ENCODE measurements at regions of chr2 and their contacts with region 1.

Region 1: DNA sequence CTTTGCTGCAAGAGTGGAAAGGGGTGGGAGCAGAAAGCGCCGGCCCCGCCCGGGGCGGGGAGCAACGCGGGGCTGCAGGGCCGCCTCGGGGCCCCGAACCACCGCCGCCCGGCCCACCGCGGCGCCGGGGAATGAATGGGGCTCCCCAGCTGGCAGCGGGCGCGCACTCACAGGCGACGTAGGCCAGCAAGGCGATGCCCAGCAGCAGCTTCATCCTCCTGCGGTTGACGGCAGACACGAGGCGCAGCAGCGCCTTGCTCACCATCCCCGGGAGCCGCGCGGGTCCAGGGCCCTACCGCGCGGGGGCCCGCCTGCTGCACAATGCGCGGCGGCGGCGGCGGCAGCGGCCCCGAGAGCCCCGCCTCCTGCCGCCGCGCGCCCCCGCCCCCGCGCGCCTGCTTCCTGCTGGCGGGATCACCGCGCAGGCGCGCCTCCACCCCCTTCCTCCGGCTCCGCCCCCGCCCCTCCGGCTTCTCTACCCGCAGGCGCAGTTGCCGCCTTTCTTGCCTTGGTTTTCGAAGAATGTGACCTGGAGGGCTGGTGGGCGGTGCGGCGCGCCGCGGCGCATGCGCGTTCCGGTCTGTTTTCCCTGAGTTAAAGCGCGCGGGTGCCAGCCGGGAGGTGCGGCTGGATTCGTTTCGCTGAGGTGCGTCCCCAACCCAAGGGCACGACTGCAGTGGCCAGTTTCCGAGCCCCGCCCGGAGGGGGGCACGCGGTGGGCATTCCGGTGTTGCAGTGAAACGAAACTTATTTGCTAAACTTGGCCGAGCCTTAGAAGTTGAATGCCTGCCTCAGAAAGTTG is at the start of gene UXS1:
- DNase-seq: peak; percentile 96 to 97 (median 96)
- H3K4me3 ChIP-seq: peak within 1 kb of the TSS; percentile 60 to 97 (median 78)
- H3K4me3 Mint-ChIP-seq: peak within 1 kb of the TSS; percentile 90 to 91
- H3K27ac ChIP-seq: peak within 1 kb of the TSS; percentile 72 to 86
- H3K27ac Mint-ChIP-seq: peak within 1 kb of the TSS; percentile 89 to 97 (median 91)
- H3K4me1 ChIP-seq: peaks cover 46 to 47% of the 10 kb centered on the region in 2 donors
- H3K4me1 Mint-ChIP-seq: peaks cover 55% of the 10 kb centered on the region
- H3K27me3 ChIP-seq: no peaks in the 10 kb centered on the region
- H3K27me3 Mint-ChIP-seq: peaks cover 1 to 3% (median 2%) of the 10 kb centered on the region in 3 donors
- CTCF ChIP-seq: no peak
- polyA plus RNA-seq, gene UXS1: 23.4 to 33.8 (median 29.3) TPM

Region 2: GRCh38 chr2:105329561-105330495 is 864.4 kb before region 1 on chr2 and contains the start of gene TGFBRAP1:
- intact Hi-C with region 1: loop called in 1 of 2 experiments (anchors 5 kb)
- DNase-seq: peak in 2 of 3 donors; percentile 49 to 51
- H3K4me3 ChIP-seq: peak within 1 kb of the TSS; percentile 59 to 83 (median 70)
- H3K4me3 Mint-ChIP-seq: peak within 1 kb of the TSS; percentile 85 to 99
- H3K27ac ChIP-seq: peak within 1 kb of the TSS; percentile 52 to 86
- H3K27ac Mint-ChIP-seq: peak within 1 kb of the TSS; percentile 81 to 95 (median 88)
- H3K4me1 ChIP-seq: peaks cover 30 to 38% of the 10 kb centered on the region in 2 donors
- H3K4me1 Mint-ChIP-seq: peaks cover 43% of the 10 kb centered on the region
- H3K27me3 ChIP-seq: no peaks in the 10 kb centered on the region
- H3K27me3 Mint-ChIP-seq: no peaks in the 10 kb centered on the region
- CTCF ChIP-seq: no peak
- polyA plus RNA-seq, gene TGFBRAP1: 10.0 to 10.5 (median 10.2) TPM

Region 3: DNA sequence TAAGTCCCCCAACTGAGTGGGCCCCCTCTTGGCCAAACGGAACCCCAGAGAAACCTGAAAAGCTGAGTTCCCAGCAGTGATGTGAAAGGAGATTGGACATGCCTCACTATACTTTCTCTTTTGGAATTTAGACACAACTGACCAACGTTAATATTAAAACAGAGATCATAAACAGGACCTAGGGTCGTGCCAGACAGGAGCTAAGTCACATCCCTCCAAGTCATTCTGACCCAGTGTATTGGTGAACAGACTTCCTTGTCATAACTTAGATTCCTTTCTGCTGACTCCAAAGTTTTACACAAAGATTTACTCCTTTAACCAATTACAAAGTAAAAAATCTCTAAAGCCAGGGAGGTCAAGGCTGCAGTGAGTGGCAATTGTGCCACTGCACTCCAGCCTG is 47.0 kb before region 1 on chr2:
- intact Hi-C with region 1: no loop called
- DNase-seq: no peak
- H3K4me3 ChIP-seq: no peak overlapping the region
- H3K4me3 Mint-ChIP-seq: no peak overlapping the region
- H3K27ac ChIP-seq: no peak overlapping the region
- H3K27ac Mint-ChIP-seq: peak overlapping the region in 3 of 7 donors; percentile 27 to 75 (median 28)
- H3K4me1 ChIP-seq: no peaks in the 10 kb centered on the region
- H3K4me1 Mint-ChIP-seq: peaks cover 2% of the 10 kb centered on the region
- H3K27me3 ChIP-seq: no peaks in the 10 kb centered on the region
- H3K27me3 Mint-ChIP-seq: peaks cover 0 to 1% (median 0%) of the 10 kb centered on the region in 3 donors
- CTCF ChIP-seq: no peak

Region 4: GRCh38 chr2:106516436-106516835 is 322.3 kb after region 1 on chr2:
- intact Hi-C with region 1: no loop called
- DNase-seq: peak in 1 of 3 donors; percentile 20
- H3K4me3 ChIP-seq: no peak overlapping the region
- H3K4me3 Mint-ChIP-seq: no peak overlapping the region
- H3K27ac ChIP-seq: no peak overlapping the region
- H3K27ac Mint-ChIP-seq: peak overlapping the region in 3 of 7 donors; percentile 13 to 80 (median 30)
- H3K4me1 ChIP-seq: peaks cover 19 to 23% of the 10 kb centered on the region in 2 donors
- H3K4me1 Mint-ChIP-seq: peaks cover 29% of the 10 kb centered on the region
- H3K27me3 ChIP-seq: no peaks in the 10 kb centered on the region
- H3K27me3 Mint-ChIP-seq: peaks cover 0 to 5% (median 2%) of the 10 kb centered on the region in 3 donors
- CTCF ChIP-seq: no peak

Region 5: GRCh38 chr2:106537047-106537446 is 342.9 kb after region 1 on chr2:
- intact Hi-C with region 1: loop called in 1 of 2 experiments (anchors 10 kb)
- DNase-seq: peak; percentile 94 to 99 (median 97)
- H3K4me3 ChIP-seq: no peak overlapping the region
- H3K4me3 Mint-ChIP-seq: peak overlapping the region in 1 of 2 donors; percentile 59
- H3K27ac ChIP-seq: peak overlapping the region; percentile 68 to 89
- H3K27ac Mint-ChIP-seq: peak overlapping the region; percentile 92 to 97 (median 94)
- H3K4me1 ChIP-seq: peaks cover 22 to 29% of the 10 kb centered on the region in 2 donors
- H3K4me1 Mint-ChIP-seq: peaks cover 29% of the 10 kb centered on the region
- H3K27me3 ChIP-seq: no peaks in the 10 kb centered on the region
- H3K27me3 Mint-ChIP-seq: peaks cover 0 to 8% (median 7%) of the 10 kb centered on the region in 3 donors
- CTCF ChIP-seq: no peak